Tibial artery (tissue), 4 donors: ENCODE measurements at regions of chr17 and their contacts with region 1.

Region 1: DNA sequence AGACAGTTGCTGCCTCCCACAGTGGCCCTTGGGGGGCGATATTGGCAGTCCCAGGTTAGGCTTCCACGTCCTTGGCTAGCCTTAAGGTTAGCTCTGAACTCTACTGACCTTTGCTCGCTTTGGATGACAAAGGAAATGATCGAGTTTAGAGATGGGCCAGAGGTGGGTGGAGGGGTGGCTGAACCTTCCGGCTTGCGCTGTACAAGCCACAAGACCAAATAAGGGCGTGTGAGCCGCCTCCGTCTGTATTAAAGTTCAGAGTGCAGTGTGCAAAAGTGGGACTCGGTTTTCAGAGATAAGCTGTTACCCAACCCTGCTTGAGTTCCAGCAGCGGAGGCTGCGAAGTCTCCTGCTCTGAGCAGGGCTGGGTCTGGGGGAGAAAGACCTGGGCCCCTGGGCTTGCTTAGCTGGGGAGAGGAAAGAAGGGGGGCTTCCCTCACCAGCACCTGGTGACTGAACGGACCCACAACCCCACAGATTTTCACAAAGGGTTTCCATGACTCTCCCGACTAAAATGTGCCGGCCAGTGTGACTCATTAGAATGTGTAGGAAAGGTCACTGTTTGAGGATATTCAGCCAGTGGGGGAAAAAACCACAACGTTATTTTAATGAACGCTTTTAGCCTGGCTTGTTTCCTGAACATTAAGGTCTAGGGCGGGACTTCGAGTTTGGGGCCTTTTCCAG is 67.2 kb downstream of the CENPV start:
- DNase-seq: peak; percentile 89 to 91
- H3K4me3 ChIP-seq: peak overlapping the region; percentile 27 to 44
- H3K27ac ChIP-seq: peak overlapping the region; percentile 91 to 93
- H3K4me1 ChIP-seq: peaks cover 0 to 40% (median 34%) of the 10 kb centered on the region in 4 donors
- H3K27me3 ChIP-seq: no peaks in the 10 kb centered on the region
- CTCF ChIP-seq: peak in 1 of 2 experiments; percentile 31

Region 2: GRCh38 chr17:16215273-16215964 is 70.7 kb before region 1 on chr17 and contains the start of gene NCOR1:
- intact Hi-C with region 1: loop called (anchors 5 kb)
- DNase-seq: peak; percentile 92 to 95
- H3K4me3 ChIP-seq: peak within 1 kb of the TSS; percentile 93 to 96
- H3K27ac ChIP-seq: peak within 1 kb of the TSS; percentile 97 to 99
- H3K4me1 ChIP-seq: peaks cover 0 to 53% (median 24%) of the 10 kb centered on the region in 4 donors
- H3K27me3 ChIP-seq: no peaks in the 10 kb centered on the region
- CTCF ChIP-seq: peak; percentile 17 to 32

Region 3: DNA sequence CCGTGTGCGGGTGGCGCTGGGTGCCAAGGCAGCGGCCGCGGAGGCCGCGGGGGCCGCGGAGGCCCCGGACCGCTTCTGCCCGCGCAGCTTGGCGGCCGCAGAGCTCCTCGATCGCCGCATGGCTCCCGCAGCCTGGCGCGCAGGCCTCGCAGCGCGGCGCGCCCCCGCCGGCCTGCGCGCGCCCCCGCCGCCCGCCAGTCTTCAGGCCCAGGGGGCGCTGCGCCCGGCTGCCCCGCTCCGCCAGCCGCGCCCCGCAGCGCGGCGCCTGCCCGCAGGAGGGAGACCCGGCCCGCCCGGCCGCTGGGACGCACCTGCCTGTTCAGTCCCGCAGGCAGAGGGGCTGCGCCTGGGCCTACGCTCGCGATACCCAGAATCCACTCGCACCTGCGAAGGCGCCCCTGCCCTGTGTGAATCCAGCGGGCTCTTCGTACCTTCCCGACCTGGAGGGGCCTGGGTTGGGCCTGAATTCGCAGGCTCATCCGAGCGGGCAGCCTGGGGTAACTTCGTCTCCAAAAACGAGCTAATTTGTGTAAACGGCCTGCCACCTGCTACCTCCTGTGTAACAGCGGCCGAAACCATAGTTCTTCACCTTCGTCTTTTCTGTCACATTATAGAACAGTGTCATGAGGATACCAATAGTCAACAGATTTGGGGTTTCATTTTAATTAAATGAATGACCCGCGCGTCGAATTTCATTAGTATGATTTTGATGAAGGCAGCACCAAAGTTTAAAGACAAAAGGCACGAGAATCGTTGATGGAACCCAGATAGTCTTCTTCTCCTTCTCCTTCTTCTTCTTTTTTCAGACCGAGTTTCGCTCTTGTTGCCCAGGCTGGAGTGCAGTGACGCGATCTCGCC is 67.4 kb after region 1 on chr17 and contains the start of gene CENPV:
- intact Hi-C with region 1: loop called (anchors 5 kb)
- DNase-seq: peak in 1 of 2 donors; percentile 64
- H3K4me3 ChIP-seq: peak within 1 kb of the TSS; percentile 68 to 69
- H3K27ac ChIP-seq: peak within 1 kb of the TSS; percentile 44 to 52
- H3K4me1 ChIP-seq: peaks cover 0 to 10% (median 8%) of the 10 kb centered on the region in 4 donors
- H3K27me3 ChIP-seq: no peaks in the 10 kb centered on the region
- CTCF ChIP-seq: peak in 1 of 2 experiments; percentile 39